Activated T-helper 1 cell treated with anti-CD3 and anti-CD28 coated beads, Interleukin-12 subunit alpha, Interleukin-12 subunit beta, Interleukin-2, Interleukin-4 antibody, amounts not matched to agents 30 ng/mL and 10 ng/mL and 1 ng/mL, durations not matched to agents 14 hours and 24 hours and 36 hours (primary cell): ENCODE measurements at regions of chr12 and their contacts with region 1.

Region 1: DNA sequence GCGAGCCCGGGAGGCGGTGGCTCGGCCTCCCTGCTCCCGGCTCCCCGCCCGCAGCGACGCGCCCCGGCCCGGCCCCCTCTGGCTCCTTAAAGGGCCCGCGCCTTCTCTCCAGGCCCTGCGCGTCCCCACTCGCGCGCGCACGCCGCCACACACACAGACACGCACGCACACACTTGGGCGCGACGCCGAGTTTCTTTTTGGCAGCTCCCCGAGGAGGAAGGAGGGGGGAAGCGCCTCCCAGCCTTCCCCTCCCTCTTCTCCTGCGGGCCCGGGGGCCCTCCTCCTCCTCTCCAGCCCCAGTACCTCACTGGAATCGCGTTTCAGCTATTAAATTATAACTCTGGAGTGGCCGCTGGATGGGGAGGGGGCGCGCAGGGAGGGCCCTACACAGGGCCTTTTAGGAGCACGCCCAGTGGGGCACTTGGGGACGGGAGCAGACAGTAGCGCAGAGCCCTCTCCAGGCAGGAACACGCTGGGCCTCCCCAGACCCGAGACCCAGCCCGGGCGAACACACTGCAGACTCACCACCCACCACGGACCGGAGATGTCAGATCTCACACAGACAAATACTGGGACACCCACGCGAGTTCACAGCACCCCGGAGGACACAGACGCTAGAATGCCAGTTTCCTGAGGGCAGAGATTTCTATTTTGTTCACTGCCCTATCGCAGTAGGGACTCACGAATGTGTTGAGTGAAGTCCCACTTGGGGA is 405 bp upstream of the NCOR2 start:
- DNase-seq: peak; percentile 82
- H3K4me3 Mint-ChIP-seq: peak overlapping the region; percentile 85
- H3K27ac Mint-ChIP-seq: peak overlapping the region; percentile 84
- H3K4me1 Mint-ChIP-seq: peaks cover 24% of the 10 kb centered on the region
- H3K27me3 Mint-ChIP-seq: peaks cover 3% of the 10 kb centered on the region

Region 2: DNA sequence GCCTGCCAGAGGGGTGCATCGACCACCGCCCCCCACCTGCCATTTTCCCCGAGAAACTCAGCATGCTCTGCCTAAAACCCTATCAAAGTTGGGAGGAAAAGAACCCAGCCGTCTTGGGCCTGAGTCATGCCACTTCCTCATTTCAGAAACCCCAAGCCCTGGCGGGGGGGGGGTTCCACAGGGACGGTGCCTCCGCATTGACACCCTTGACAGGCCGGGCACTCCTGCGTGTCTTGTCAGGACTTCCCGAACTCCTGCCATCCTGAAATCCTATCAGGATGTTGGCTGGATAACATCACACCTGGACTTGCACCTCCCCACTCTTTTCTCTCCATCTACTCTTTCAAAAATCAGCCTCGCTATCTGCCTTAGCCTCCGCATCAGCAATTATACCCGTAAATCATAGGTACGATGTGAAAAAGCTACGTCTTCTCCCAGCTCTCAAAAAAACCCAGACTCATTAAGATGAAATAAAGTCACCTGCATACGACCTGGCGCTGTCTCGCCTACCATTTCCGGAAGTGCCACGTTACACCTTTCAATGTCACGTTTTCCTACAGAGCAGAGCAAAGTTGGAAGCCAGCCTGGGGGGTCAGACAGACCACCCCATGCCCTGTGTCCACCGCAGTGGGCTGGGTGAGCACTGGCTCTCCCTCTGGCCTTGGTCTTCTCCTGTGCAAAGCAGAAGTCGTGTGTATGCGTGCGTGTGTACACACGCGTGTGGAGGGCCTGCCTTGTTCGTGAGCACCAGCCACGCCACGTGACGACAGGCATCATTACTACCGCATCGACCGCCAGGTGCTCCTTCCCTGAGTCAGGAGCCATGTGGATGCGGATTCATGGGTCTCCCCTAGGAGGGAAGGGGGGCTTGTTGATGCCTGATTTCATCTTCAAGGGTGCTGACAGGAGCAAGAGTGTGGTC is 176.2 kb before region 1 on chr12:
- intact Hi-C with region 1: loop called (anchors 5 kb)
- DNase-seq: no peak
- H3K4me3 Mint-ChIP-seq: peak overlapping the region; percentile 13
- H3K27ac Mint-ChIP-seq: peak overlapping the region; percentile 54
- H3K4me1 Mint-ChIP-seq: peaks cover 22% of the 10 kb centered on the region
- H3K27me3 Mint-ChIP-seq: peaks cover 4% of the 10 kb centered on the region

Region 3: DNA sequence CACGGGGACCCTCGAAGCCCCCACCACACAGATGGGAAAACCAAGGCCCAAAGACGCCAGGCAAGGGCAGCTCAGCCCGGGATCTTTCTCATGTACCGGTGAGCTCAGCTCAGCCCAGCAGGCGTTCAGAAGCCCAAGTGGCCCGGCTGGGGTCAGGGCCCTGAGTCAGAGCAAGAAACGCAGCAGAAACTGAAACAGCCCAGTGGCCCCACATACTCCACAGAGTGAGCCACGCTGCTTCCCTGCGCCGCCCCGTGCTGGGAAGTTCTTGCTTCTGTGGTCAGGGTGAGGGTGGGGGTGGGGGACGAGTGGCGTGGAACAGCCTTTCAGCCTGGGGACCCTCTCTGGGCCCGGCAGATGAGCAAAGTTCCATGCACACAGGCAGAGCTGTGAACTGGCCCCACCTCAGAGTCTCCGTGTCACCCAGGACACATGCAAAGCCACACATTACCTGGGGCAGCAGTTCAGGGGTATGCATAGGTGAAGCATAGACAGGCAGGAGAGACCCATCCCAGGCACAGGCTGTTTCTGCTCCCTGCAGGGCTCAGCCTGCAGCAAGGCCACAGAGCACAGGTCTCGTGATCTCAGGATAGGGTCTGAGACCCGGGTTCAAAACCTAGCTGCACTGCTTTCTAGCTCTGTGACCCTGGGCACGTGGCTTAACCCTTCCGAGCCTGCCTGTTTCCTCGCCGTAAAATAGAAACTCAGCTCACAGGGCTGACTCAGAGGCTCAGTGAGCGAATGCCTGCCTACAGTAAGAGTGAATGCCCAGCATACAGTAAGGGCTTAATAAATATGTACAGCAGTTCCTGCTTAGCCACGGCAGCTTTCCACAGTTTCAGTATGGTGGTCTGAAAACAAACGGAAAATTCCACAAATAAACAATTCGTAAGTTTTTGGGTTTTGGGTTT is 22.1 kb before region 1 on chr12:
- intact Hi-C with region 1: loop called (anchors 1 kb)
- DNase-seq: peak; percentile 57
- H3K4me3 Mint-ChIP-seq: peak overlapping the region; percentile 26
- H3K27ac Mint-ChIP-seq: peak overlapping the region; percentile 58
- H3K4me1 Mint-ChIP-seq: peaks cover 50% of the 10 kb centered on the region
- H3K27me3 Mint-ChIP-seq: peaks cover 3% of the 10 kb centered on the region

Region 4: DNA sequence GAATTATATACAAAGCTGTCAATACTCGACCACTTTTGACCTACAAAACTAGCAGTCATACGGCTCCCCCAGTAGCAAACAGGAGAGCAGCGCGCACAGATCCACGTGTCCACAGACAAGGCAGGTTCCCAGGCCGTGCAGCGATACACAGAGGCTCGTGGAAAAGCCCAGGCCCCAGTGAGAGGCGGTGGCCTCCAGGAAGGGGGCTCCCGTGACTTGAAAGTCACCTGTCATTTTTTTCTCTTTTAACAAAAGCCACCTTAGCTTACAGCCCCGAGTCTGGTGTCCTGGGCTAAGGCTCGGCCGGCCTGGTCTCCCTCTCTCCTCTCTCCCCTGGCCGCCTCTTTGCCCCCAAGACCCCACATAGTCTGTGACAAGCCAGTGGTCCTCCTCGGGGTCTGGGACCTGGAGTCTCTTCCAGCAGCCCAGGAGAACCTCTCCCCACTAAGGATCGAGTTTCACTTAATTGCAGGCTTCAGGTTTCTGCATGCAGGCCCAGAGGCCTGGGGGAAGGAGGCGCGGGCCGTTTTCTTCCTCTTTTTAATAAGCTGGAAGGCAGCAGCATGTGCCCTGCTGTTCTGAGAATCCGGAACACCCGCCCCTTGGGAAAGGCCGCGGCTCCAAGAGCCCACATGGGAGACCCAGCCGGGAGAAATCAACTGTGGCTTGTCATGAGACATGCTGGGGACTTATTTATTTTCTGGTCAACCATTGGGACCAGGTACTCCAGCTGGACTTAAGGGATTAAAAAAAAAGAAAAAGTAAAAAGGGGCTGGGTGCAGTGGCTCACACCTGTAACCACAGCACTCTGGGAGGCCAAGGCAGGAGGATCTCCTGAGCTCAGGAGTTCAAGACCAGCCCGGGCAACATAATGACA is 16.3 kb before region 1 on chr12:
- intact Hi-C with region 1: loop called (anchors 2 kb)
- DNase-seq: no peak
- H3K4me3 Mint-ChIP-seq: no peak overlapping the region
- H3K27ac Mint-ChIP-seq: no peak overlapping the region
- H3K4me1 Mint-ChIP-seq: peaks cover 41% of the 10 kb centered on the region
- H3K27me3 Mint-ChIP-seq: peaks cover 3% of the 10 kb centered on the region

Region 5: DNA sequence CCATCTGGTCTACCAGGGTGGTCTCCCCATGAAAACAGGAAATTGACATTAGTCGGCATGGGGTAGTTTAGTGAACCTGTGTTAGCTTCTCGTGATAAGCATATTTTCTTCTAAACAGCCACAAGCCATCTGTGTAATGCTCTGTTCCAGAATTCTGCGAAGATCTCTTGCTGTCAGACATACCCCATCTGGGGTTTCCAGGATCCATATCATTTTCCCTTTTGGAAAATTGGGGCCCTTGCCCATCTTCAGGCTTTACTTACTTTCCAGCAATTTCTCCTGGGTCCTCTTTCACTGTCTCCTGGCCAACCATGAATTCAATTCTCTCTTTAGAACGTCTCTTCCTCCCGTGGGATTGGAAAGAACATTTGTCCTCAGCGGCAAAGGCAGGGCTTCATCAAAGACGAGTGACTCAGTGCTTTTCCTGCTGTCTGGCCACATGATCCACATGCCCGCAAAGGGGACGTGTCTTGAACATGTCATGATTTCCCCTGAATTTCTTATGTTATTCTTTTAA is 21.0 kb after region 1 on chr12:
- intact Hi-C with region 1: loop called (anchors 2 kb)
- DNase-seq: no peak
- H3K4me3 Mint-ChIP-seq: no peak overlapping the region
- H3K27ac Mint-ChIP-seq: no peak overlapping the region
- H3K4me1 Mint-ChIP-seq: peaks cover 14% of the 10 kb centered on the region
- H3K27me3 Mint-ChIP-seq: peaks cover 8% of the 10 kb centered on the region